HEK293 (cell line): ENCODE measurements at regions of chr1 and their contacts with region 1.

Region 1: GRCh38 chr1:209150114-209150513 is 433.4 kb upstream of the CAMK1G start:
- H3K4me3 ChIP-seq: no peak overlapping the region
- H3K27ac ChIP-seq: no peak overlapping the region
- H3K4me1 ChIP-seq: no peaks in the 10 kb centered on the region
- CTCF ChIP-seq: no peak

Region 2: DNA sequence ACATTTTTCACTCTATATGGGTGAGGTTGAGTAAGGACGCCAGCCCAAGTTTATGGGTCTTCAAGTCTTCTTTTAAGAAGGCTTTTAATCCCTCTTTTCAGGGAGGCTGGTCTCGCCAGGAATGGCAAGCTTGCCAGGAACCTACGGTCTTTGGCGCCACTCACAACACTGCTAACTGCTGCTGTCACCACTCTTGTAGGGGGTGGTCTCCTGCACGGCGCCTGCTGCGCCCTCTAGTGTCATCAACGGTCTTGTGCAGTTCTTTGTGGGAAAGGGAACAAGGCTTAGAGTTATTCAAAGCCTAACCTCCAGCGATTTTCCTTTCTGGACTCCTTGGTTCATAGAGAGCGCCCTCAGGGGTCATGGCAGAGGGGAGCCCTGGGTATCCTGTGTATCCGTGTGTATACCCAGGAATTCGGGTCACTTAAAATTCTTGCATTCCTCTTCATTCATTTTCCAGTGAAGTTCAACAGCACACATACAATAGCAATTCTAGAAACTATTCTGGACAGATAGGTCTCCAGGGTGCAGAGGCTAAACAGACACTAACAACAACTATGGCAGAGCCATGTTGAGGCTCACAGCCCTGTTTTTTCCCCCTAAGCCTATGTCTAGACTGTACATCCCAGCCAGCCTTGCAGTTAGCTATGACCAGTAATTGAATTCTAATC is 40.6 kb after region 1 on chr1:
- CTCF ChIA-PET with region 1: interaction called, 10 read pairs
- POLR2A ChIA-PET with region 1: no interaction called
- H3K4me3 ChIP-seq: no peak overlapping the region
- H3K27ac ChIP-seq: no peak overlapping the region
- H3K4me1 ChIP-seq: no peaks in the 10 kb centered on the region
- CTCF ChIP-seq: peak; percentile 64; the same call in 1 of the 2 replicates

Region 3: DNA sequence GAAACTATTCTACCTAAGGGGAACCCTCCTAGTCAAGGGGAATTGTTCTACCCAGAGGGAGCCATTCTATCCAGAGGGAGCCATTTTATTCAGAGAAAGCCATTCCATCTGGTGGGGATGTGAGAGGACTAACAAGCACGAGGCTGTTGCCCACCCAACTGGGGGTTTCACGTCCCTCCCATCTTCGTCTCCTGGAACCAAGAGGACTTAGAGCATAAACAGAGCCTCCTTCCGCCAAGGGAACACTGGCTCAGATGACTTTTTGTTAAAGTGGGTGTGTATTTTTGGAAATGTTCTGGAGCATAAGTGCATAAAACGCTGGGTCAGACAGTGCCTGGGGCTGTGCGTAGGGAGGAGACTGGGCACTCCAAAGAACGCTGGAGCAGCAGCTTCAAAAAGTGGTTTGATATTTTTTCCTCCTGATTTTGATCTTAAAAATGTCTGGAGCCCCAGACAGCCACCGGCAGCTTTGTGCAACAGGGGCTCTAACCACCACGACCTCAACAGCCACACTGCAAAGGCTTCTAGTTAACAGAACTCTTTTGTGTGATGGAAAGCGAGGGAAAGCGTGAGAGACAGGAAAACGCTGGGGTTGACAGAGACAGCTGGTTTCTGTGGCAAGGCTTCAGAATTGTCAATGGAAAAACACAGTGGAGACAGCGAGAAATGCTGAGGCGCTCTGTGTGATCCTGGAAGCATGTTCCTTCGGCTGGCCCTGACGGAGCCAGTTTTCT is 69.8 kb after region 1 on chr1:
- CTCF ChIA-PET with region 1: no interaction called
- POLR2A ChIA-PET with region 1: no interaction called
- H3K4me3 ChIP-seq: no peak overlapping the region
- H3K27ac ChIP-seq: no peak overlapping the region
- H3K4me1 ChIP-seq: no peaks in the 10 kb centered on the region
- CTCF ChIP-seq: no peak